H1 (cell line): ENCODE measurements at regions of chr20 and their contacts with region 1.

Region 1: GRCh38 chr20:8837396-8837795 is 231.5 kb upstream of the PLCB4 start:
- DNase-seq: no peak
- H3K4me3 ChIP-seq: no peak overlapping the region
- H3K27ac ChIP-seq: no peak overlapping the region
- H3K4me1 ChIP-seq: no peaks in the 10 kb centered on the region
- H3K27me3 ChIP-seq: no peaks in the 10 kb centered on the region
- CTCF ChIP-seq: no peak
- EP300 ChIP-seq: no peak
- POLR2A ChIP-seq: no peak
- RAD21 ChIP-seq: no peak

Region 2: DNA sequence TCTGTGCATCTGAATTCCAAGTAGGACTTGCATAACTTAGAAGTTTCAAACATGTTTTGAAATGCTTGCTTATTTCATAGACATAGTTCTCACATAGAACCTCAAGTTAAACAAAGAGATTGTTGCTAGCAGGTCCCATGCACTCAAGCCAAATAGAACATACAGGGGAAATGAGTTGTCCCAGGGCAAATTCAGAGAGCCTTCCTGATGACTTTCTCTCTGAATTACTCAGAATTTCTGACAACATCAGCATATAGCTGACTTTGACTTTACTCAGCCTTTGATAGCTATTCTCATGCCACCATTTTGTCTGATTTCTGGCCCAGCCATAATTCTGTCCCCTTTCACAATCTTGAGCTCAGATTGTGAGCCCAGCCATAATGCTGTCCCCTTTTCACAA is 101.7 kb before region 1 on chr20:
- CTCF ChIA-PET with region 1: no interaction called
- POLR2A ChIA-PET with region 1: no interaction called
- DNase-seq: no peak
- H3K4me3 ChIP-seq: no peak overlapping the region
- H3K27ac ChIP-seq: no peak overlapping the region
- H3K4me1 ChIP-seq: no peaks in the 10 kb centered on the region
- H3K27me3 ChIP-seq: no peaks in the 10 kb centered on the region
- CTCF ChIP-seq: no peak
- EP300 ChIP-seq: no peak
- POLR2A ChIP-seq: no peak
- RAD21 ChIP-seq: no peak

Region 3: DNA sequence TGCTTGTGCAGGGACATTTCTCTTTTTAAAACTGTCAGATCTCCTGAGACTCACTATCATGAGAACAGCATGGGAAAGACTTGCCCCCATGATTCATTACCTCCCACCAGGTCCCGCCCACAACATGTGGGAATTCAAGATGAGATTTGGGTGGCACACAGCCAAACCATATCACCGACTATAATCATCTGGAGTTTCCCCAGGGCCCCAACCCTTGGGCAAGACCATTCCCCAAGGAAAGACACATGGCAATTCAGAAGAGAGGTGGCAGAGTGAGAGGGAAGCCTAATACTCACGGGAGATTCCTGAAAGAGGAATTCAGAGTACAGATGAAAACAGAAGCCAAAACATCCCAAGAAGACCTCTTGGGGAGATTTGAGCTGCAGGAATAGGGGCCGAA is 59.5 kb before region 1 on chr20:
- CTCF ChIA-PET with region 1: no interaction called
- POLR2A ChIA-PET with region 1: no interaction called
- DNase-seq: no peak
- H3K4me3 ChIP-seq: no peak overlapping the region
- H3K27ac ChIP-seq: no peak overlapping the region
- H3K4me1 ChIP-seq: peaks cover 0 to 2% (median 0%) of the 10 kb centered on the region in 4 experiments; a peak in 2 of 7 replicates
- H3K27me3 ChIP-seq: no peaks in the 10 kb centered on the region
- CTCF ChIP-seq: no peak
- EP300 ChIP-seq: no peak
- POLR2A ChIP-seq: no peak
- RAD21 ChIP-seq: no peak

Region 4: GRCh38 chr20:8853805-8854338 is 16.5 kb after region 1 on chr20:
- CTCF ChIA-PET with region 1: interaction called, 10 read pairs
- POLR2A ChIA-PET with region 1: no interaction called
- DNase-seq: no peak
- H3K4me3 ChIP-seq: no peak overlapping the region
- H3K27ac ChIP-seq: no peak overlapping the region
- H3K4me1 ChIP-seq: peaks cover 0 to 3% (median 0%) of the 10 kb centered on the region in 4 experiments; a peak in 2 of 7 replicates
- H3K27me3 ChIP-seq: no peaks in the 10 kb centered on the region
- CTCF ChIP-seq: peak in 2 of 3 experiments; percentile 74 to 90; a peak in 3 of 4 replicates
- EP300 ChIP-seq: no peak
- POLR2A ChIP-seq: no peak
- RAD21 ChIP-seq: peak; percentile 91 to 92